Endothelial cell of umbilical vein (primary cell): ENCODE measurements at regions of chr11 and their contacts with region 1.

Region 1: GRCh38 chr11:120335908-120336640 is at the start of gene ARHGEF12:
- DNase-seq: peak; percentile 95
- H3K4me3 ChIP-seq: peak within 1 kb of the TSS; percentile 82 to 98 (median 96)
- H3K27ac ChIP-seq: peak within 1 kb of the TSS; percentile 87
- H3K4me1 ChIP-seq: peaks cover 40% of the 10 kb centered on the region
- H3K27me3 ChIP-seq: no peaks in the 10 kb centered on the region
- CTCF ChIP-seq: peak; percentile 42 to 56
- POLR2A ChIP-seq: peak; percentile 80
- total RNA-seq, gene ARHGEF12: 117 and 125 TPM in 2 replicates

Region 2: GRCh38 chr11:120310870-120311269 is 25.2 kb before region 1 on chr11:
- CTCF ChIA-PET with region 1: no interaction called
- POLR2A ChIA-PET with region 1: no interaction called
- dilution Hi-C with region 1: no loop called
- intact Hi-C with region 1: no loop called
- DNase-seq: no peak
- H3K4me3 ChIP-seq: no peak overlapping the region
- H3K27ac ChIP-seq: no peak overlapping the region
- H3K4me1 ChIP-seq: peaks cover 6% of the 10 kb centered on the region
- H3K27me3 ChIP-seq: peaks cover 9 to 10% of the 10 kb centered on the region in 2 experiments
- CTCF ChIP-seq: no peak
- POLR2A ChIP-seq: no peak

Region 3: GRCh38 chr11:120324932-120325810 is 10.9 kb before region 1 on chr11 and contains the start of gene TLCD5:
- CTCF ChIA-PET with region 1: interaction called, 6 read pairs
- POLR2A ChIA-PET with region 1: interaction called, 4 read pairs
- dilution Hi-C with region 1: no loop called
- intact Hi-C with region 1: loop called (anchors 1 kb)
- DNase-seq: peak; percentile 73
- H3K4me3 ChIP-seq: peak within 1 kb of the TSS; percentile 29 to 83 (median 77)
- H3K27ac ChIP-seq: peak within 1 kb of the TSS; percentile 73
- H3K4me1 ChIP-seq: peaks cover 19% of the 10 kb centered on the region
- H3K27me3 ChIP-seq: peaks cover 0 to 2% of the 10 kb centered on the region in 2 experiments
- CTCF ChIP-seq: peak; percentile 6 to 34
- POLR2A ChIP-seq: peak; percentile 81
- total RNA-seq, gene TLCD5: 6.1 and 6.3 TPM in 2 replicates

Region 4: DNA sequence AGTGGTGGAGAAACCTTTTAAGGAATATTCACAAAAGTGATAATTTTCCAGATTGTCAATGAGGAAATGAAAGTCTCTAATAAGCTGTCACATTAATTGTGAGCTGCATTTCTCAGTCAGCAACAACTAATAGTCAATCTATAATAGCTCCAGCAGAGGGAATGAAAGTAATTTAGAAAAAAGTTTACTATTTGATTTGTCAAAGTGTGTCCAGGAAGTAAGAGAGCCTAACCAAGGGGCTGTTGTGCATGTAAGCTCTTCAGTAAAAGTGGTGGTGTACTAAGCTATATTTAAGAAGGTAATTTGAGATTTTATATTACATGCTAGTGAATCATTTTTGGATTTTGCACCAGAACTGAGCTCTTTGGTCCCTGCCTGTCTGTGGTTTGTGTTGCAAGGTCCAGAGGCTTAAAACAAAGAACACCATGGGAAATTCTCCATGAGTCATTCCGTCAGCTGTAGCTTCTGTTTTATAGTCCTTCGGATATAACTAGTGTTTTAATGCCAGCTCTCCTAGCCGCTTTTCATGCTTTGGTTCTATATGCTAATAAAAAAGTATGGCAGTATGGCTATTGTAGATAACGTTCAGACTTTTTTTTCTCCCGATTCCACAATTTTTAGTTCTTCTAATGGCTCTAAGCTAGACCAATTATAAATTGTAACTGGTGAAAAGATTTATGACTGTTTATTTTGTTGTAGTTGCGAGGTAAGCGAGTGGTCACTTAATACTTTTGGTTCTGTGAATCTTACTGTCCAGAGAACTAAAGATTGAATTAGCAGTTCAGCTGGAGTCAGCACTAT is 64.7 kb after region 1 on chr11:
- CTCF ChIA-PET with region 1: interaction called, 14 read pairs
- POLR2A ChIA-PET with region 1: interaction called, 6 read pairs
- dilution Hi-C with region 1: no loop called
- intact Hi-C with region 1: loop called (anchors 1 kb)
- DNase-seq: peak; percentile 93
- H3K4me3 ChIP-seq: peak overlapping the region in 2 of 3 experiments; percentile 16 to 73
- H3K27ac ChIP-seq: peak overlapping the region; percentile 78
- H3K4me1 ChIP-seq: peaks cover 36% of the 10 kb centered on the region
- H3K27me3 ChIP-seq: no peaks in the 10 kb centered on the region
- CTCF ChIP-seq: no peak
- POLR2A ChIP-seq: no peak

Region 5: GRCh38 chr11:120446802-120447201 is 110.7 kb after region 1 on chr11:
- CTCF ChIA-PET with region 1: interaction called, 16 read pairs
- POLR2A ChIA-PET with region 1: no interaction called
- dilution Hi-C with region 1: no loop called
- intact Hi-C with region 1: no loop called
- DNase-seq: no peak
- H3K4me3 ChIP-seq: no peak overlapping the region
- H3K27ac ChIP-seq: no peak overlapping the region
- H3K4me1 ChIP-seq: no peaks in the 10 kb centered on the region
- H3K27me3 ChIP-seq: no peaks in the 10 kb centered on the region
- CTCF ChIP-seq: no peak
- POLR2A ChIP-seq: no peak

Region 6: GRCh38 chr11:120564573-120565311 is 228.7 kb after region 1 on chr11:
- CTCF ChIA-PET with region 1: no interaction called
- POLR2A ChIA-PET with region 1: no interaction called
- dilution Hi-C with region 1: no loop called
- intact Hi-C with region 1: loop called (anchors 1 kb)
- DNase-seq: peak; percentile 45
- H3K4me3 ChIP-seq: peak overlapping the region in 2 of 3 experiments; percentile 24 to 39
- H3K27ac ChIP-seq: peak overlapping the region; percentile 88
- H3K4me1 ChIP-seq: peaks cover 25% of the 10 kb centered on the region
- H3K27me3 ChIP-seq: no peaks in the 10 kb centered on the region
- CTCF ChIP-seq: peak in 1 of 2 donors; percentile 30
- POLR2A ChIP-seq: no peak

Region 7: DNA sequence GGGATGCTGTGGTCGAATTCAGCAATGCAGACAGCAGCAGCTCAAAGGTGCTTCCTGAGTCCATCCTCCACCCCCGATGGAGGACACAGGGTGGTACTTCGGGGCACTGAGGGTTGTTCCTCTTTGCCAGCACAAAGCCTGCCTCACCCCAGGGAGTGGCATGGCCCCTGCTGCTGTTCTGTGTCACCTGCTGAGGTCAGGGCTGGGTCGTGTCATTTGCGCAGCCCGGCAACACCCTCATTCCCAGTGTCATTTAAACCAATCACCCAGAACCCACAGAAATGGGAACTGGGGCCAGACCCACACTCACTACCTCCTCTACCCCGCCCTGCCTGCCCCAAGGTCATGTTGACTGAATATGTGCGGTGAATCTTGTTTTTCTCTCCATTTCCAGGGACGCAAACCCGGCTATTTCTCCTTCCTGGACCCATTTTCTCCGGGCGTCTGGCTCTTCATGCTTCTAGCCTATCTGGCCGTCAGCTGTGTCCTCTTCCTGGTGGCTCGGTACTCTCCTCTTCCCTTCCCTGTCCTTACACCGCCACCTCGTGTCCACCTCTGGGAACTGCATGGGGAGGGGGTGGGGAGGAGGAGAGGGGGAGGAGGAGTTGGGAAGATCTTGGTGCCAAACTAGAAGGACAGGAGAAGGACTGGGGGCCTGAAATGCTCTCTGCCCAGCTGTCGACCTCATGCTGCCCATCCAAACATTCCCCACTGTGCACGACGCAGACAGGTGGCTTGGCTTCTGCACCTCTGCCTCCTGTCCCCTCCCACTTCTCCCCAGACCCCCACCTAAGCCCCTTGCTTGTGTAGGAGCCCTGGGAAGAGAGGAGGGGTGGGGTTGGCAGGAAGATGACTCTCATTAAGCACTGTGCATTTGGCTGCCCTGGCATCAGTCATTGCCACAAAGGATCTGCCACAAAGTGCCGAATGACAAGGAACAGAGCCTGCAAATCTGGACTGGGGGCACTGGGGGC is 616.7 kb after region 1 on chr11:
- CTCF ChIA-PET with region 1: no interaction called
- POLR2A ChIA-PET with region 1: no interaction called
- dilution Hi-C with region 1: no loop called
- intact Hi-C with region 1: loop called (anchors 5 kb)
- DNase-seq: peak; percentile 65
- H3K4me3 ChIP-seq: no peak overlapping the region
- H3K27ac ChIP-seq: no peak overlapping the region
- H3K4me1 ChIP-seq: no peaks in the 10 kb centered on the region
- H3K27me3 ChIP-seq: no peaks in the 10 kb centered on the region
- CTCF ChIP-seq: peak; percentile 39 to 77
- POLR2A ChIP-seq: no peak

Region 8: GRCh38 chr11:121132196-121132976 is 796.3 kb after region 1 on chr11:
- CTCF ChIA-PET with region 1: no interaction called
- POLR2A ChIA-PET with region 1: no interaction called
- dilution Hi-C with region 1: no loop called
- intact Hi-C with region 1: no loop called
- DNase-seq: no peak
- H3K4me3 ChIP-seq: no peak overlapping the region
- H3K27ac ChIP-seq: no peak overlapping the region
- H3K4me1 ChIP-seq: no peaks in the 10 kb centered on the region
- H3K27me3 ChIP-seq: no peaks in the 10 kb centered on the region
- CTCF ChIP-seq: no peak
- POLR2A ChIP-seq: no peak

Region 9: DNA sequence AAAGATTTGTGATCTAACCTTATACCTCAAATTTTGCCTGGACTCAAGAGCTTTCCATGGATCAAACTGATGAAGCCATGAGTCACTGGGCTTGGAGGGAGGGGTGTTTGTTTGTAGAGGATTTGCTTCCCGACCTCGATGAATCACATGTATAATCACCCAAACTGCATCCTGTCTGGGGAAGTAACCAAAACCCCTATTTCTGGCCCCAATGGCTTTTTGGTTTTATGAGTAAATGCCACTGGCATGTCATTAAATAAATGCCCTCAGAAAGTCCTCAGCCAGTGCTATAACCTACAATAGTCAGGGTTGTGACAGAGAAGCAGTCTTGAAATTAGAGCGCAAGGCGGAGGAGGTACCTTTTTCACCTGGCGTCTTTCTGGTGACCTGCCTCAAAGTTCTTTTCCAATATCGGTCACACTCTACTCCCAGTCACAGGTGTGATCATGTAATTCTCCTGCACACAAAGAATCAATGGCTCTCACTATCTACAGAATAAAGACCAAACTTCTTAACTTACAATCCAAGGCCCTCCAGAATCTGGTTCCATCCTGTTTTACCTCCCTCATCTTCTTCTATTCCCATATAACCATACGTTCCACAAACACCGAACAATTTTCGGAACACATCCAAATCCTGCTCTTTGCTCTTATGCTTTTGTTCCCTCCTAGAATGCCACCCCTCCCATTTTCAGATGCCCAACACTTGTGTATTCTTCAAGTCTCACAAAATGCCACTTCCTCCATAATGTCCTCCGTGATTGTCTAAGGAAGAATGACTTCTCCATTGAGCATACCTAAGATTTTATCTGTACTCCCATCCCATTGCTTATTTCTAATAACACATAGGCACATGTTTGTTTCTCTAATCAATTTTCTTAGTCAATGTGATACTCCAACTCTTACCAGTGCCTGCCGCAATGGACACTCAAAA is 1861.2 kb after region 1 on chr11:
- CTCF ChIA-PET with region 1: no interaction called
- POLR2A ChIA-PET with region 1: no interaction called
- dilution Hi-C with region 1: no loop called
- intact Hi-C with region 1: loop called (anchors 10 kb)
- DNase-seq: peak; percentile 96
- H3K4me3 ChIP-seq: peak overlapping the region in 1 of 3 experiments; percentile 26
- H3K27ac ChIP-seq: peak overlapping the region; percentile 95
- H3K4me1 ChIP-seq: peaks cover 69% of the 10 kb centered on the region
- H3K27me3 ChIP-seq: no peaks in the 10 kb centered on the region
- CTCF ChIP-seq: no peak
- POLR2A ChIP-seq: peak; percentile 82